Left cardiac atrium (tissue), 4 donors: ENCODE measurements at regions of chr18 and their contacts with region 1.

Region 1: GRCh38 chr18:22563098-22563707 is 145.5 kb upstream of the CTAGE1 start:
- DNase-seq: no peak
- ATAC-seq: peak; percentile 62 to 71

Region 2: DNA sequence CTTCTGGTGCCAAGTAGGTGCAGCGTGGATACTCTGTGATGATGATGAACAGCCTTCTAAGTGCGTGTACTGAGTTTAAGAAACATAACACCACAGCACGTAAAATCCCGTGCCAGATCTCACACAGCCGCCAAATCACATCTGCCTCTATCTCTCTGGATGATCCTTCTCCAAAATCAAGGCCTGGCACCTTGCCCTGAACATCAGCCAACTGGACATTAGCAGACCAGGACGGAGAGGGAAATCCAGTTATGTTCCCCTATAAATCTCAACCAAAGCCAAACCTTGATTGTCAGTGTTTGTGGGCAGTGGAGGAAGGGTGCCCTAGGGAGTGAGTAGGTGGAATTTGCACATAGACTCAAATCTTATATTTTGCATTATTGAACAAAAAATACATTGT is 658.3 kb before region 1 on chr18:
- intact Hi-C with region 1: loop called (anchors 5 to 10 kb)
- DNase-seq: peak; percentile 42
- ATAC-seq: peak in 1 of 2 donors; percentile 69

Region 3: GRCh38 chr18:21997207-21998143 is 565.7 kb before region 1 on chr18:
- intact Hi-C with region 1: loop called (anchors 2 to 10 kb)
- DNase-seq: no peak
- ATAC-seq: peak; percentile 74 to 77

Region 4: DNA sequence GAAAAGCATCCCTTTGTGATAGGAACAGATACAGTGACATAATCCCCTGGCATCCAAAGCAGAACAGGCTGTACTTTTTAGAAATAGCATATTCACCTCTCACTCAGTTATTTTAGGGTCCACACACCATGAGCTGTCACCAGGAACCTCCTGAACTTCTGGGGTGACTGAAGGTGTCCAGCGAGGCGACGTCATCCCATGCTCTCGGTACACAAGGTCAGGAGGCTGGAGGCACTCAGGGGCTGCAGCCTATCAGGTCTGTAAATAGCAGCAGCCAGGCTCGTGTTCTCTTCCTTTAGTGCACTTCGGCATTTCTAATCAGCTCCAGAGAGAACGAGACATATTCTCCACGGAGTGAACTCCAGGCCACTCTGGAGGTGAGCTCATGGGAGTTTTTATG is 295.5 kb before region 1 on chr18:
- intact Hi-C with region 1: loop called in 1 of 2 experiments (anchors 5 kb)
- DNase-seq: peak; percentile 83
- ATAC-seq: peak; percentile 92

Region 5: DNA sequence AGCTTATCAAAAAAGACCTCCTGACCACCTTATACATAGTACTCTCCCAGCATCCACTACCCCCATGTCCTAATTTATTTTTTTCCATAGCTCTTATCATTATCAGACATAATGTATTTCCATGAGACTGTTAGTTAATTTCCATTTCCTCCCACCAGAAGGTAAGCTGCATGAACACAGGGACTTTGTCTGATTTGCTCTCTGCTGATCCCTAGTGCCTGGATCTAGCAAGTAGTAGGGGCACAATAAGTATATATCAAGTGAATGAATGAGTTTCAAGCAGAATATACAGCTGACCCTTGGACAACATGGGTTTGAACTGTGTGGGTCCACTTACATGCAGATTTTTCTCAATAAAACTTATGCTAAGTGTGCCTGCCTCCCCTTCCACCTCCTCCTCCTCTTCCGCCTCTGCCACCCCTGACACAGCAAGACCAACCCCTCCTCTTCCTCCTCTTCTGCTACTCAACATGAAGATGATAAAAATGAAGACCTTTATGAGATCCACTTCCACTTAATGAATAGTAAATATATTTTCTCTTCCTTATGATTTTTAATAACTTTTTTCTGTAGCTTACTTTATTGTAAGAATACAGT is 199.2 kb before region 1 on chr18:
- intact Hi-C with region 1: loop called (anchors 5 to 10 kb)
- DNase-seq: no peak
- ATAC-seq: peak; percentile 49 to 70

Region 6: GRCh38 chr18:22473366-22473765 is 89.8 kb before region 1 on chr18:
- intact Hi-C with region 1: no loop called
- DNase-seq: no peak
- ATAC-seq: no peak